Posterior vena cava (tissue), 2 donors: ENCODE measurements at regions of chr9 and their contacts with region 1.

Region 1: DNA sequence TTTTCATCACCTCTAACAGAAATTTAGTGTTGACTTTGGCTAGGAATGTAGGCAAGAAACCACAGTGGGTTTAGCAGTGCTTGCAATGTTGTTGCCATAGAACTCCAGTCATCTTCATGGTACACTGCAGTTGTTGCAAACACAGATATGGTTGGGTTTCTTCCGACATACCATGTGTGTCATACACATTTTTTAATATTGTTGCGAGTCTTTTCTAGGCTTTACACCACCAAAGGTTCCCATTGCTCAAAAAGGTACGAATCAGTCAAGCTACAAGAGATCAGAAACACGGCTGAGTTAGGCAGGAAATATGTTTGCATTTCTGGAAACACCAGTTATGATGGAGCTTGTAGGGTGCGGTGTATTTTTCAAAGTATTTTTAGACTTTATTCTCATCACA is 172.4 kb downstream of the SYK start:
- DNase-seq: no peak

Region 2: GRCh38 chr9:90925581-90926257 is 48.3 kb before region 1 on chr9:
- intact Hi-C with region 1: no loop called
- DNase-seq: no peak

Region 3: GRCh38 chr9:90956026-90956810 is 17.8 kb before region 1 on chr9:
- intact Hi-C with region 1: no loop called
- DNase-seq: no peak

Region 4: GRCh38 chr9:90991953-90992352 is 17.9 kb after region 1 on chr9:
- intact Hi-C with region 1: loop called in 1 of 2 experiments (anchors 1 kb)
- DNase-seq: no peak

Region 5: GRCh38 chr9:91572044-91572443 is 598.0 kb after region 1 on chr9:
- intact Hi-C with region 1: no loop called
- DNase-seq: no peak